GM10248 (cell line): ENCODE measurements at regions of chr22 and their contacts with region 1.

Region 1: GRCh38 chr22:22687638-22688500 is 43.5 kb downstream of the GGTLC2 start:
- DNase-seq: peak; percentile 37
- CTCF ChIP-seq: peak; percentile 77

Region 2: DNA sequence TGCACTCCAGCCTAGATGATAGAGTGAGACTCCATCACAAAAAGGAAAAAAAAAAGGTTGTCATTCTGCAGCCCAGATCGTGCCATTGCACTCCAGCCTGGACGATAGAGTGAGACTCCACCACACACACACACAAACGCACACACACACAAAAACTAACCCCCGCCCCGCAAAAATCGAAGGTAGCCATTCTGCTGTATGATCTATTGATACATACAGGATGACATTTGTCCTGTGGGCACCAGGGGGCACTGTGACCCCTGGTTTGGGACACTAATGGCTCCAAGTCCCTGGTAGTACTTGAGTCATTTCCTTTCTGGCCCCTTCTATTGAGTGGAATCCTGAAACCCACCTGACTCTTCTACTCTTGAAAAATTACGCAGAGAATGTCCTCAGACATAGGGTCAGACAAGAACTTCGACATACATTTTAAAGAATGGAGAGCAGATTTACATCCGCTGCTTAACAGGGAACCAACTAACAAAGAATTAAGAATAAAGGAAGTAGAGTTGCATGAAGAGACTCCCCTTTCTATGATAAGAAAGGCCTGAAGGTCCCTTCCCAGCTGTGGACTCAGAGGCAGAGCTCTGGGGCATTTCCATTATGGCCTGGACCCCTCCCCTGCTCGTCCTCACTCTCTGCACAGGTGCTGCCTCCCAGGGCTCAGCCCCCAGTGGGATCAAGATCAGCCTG is 93.8 kb before region 1 on chr22:
- CTCF ChIA-PET with region 1: interaction called, 11 read pairs
- POLR2A ChIA-PET with region 1: no interaction called
- DNase-seq: peak; percentile 75
- CTCF ChIP-seq: peak; percentile 82

Region 3: DNA sequence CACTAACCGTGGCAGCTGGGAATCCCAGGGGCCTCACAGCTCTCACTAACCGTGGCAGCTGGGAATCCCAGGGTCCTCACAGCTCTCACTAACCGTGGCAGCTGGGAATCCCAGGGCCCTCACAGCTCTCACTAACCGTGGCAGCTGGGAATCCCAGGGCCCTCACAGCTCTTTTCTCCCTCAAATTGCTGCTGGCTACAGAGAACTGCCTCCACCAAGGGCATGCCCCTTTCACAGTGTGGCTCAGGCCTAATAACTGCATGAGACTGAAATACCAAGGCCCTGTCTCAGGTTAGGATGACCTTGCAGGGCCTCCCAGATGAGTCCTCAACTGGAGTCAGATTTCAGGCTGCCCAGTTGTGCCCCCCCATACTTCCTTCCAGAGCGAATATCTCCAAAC is 78.6 kb before region 1 on chr22:
- CTCF ChIA-PET with region 1: no interaction called
- POLR2A ChIA-PET with region 1: no interaction called
- DNase-seq: no peak
- CTCF ChIP-seq: no peak

Region 4: GRCh38 chr22:22666307-22667091 is 21.4 kb before region 1 on chr22:
- CTCF ChIA-PET with region 1: interaction called, 42 read pairs
- POLR2A ChIA-PET with region 1: no interaction called
- DNase-seq: peak; percentile 58
- CTCF ChIP-seq: peak; percentile 61

Region 5: GRCh38 chr22:22673628-22674027 is 14.2 kb before region 1 on chr22:
- CTCF ChIA-PET with region 1: interaction called, 42 read pairs
- POLR2A ChIA-PET with region 1: no interaction called
- DNase-seq: no peak
- CTCF ChIP-seq: no peak

Region 6: GRCh38 chr22:22702237-22703202 is 14.7 kb after region 1 on chr22:
- CTCF ChIA-PET with region 1: interaction called, 21 read pairs
- POLR2A ChIA-PET with region 1: no interaction called
- DNase-seq: no peak
- CTCF ChIP-seq: peak; percentile 72

Region 7: GRCh38 chr22:22710719-22711531 is 23.1 kb after region 1 on chr22:
- CTCF ChIA-PET with region 1: interaction called, 20 read pairs
- POLR2A ChIA-PET with region 1: no interaction called
- DNase-seq: peak; percentile 71
- CTCF ChIP-seq: peak; percentile 90

Region 8: GRCh38 chr22:22753526-22754267 is 65.8 kb after region 1 on chr22:
- CTCF ChIA-PET with region 1: interaction called, 17 read pairs
- POLR2A ChIA-PET with region 1: no interaction called
- DNase-seq: peak; percentile 87
- CTCF ChIP-seq: peak; percentile 89